ENCODE measurements at regions of chr2 and their contacts with region 1.

Region 1: GRCh38 chr2:62505750-62506420 is at the start of gene TMEM17:
- DNase-seq: peak; percentile 95 to 98
- H3K4me3 ChIP-seq: peak within 1 kb of the TSS; percentile 51
- H3K4me3 Mint-ChIP-seq: peak within 1 kb of the TSS; percentile 83
- H3K27ac Mint-ChIP-seq: peak within 1 kb of the TSS; percentile 87
- H3K4me1 ChIP-seq: no peaks in the 10 kb centered on the region
- H3K4me1 Mint-ChIP-seq: peaks cover 15% of the 10 kb centered on the region
- H3K27me3 ChIP-seq: no peaks in the 10 kb centered on the region
- H3K27me3 Mint-ChIP-seq: no peaks in the 10 kb centered on the region
- CTCF ChIP-seq: no peak
- total RNA-seq, gene TMEM17: 2.6 and 3.3 TPM in 2 replicates

Region 2: GRCh38 chr2:62485761-62486438 is 20.0 kb before region 1 on chr2:
- CTCF ChIA-PET with region 1: no interaction called
- POLR2A ChIA-PET with region 1: no interaction called
- intact Hi-C with region 1: loop called (anchors 2 kb)
- DNase-seq: no peak
- H3K4me3 ChIP-seq: no peak overlapping the region
- H3K4me3 Mint-ChIP-seq: no peak overlapping the region
- H3K27ac Mint-ChIP-seq: peak overlapping the region; percentile 60
- H3K4me1 ChIP-seq: peaks cover 15% of the 10 kb centered on the region
- H3K4me1 Mint-ChIP-seq: peaks cover 16% of the 10 kb centered on the region
- H3K27me3 ChIP-seq: no peaks in the 10 kb centered on the region
- H3K27me3 Mint-ChIP-seq: no peaks in the 10 kb centered on the region
- CTCF ChIP-seq: no peak

Region 3: DNA sequence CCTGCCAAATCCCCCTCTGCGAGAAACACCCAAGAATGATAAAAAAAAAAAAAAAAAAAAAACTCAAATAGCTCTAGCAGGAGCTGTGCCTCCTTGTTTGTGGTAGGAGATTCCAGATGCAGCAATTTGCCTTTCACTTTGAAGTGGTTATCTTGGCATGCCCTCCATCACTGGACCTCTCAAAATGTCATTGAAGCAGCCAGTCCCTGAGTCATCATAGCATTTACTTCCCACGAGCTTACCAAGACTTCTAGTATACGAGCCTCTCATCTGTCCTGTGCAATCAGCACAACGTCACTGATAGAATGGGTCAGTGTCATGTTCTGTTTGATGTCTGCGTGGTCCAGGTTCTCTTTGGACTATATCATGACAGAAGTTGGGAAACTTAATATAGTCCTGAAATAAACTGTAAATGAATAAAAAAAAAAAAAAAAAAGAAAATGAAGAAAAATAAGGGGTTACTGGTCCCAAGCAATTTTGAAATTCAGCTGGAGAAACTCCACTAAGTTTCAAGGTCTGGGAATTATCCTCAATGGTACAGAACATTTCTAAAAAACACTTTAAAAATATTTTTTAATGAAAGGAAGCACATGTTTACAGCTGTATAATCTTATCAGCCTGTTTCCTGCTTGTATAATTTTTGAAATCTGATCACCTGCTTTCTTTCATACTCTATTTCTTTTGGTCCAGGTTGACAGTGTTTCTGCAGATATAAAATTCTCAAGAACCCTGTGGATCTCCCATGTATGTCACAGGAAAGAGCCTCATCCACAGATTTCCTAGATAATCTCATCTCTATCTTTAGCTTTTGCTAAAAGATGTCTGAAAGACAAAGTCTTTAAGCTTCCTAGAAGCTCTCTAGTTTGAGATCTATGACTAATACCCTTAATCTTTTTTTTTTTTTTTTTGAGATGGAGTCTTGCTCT is 125.5 kb after region 1 on chr2:
- CTCF ChIA-PET with region 1: no interaction called
- POLR2A ChIA-PET with region 1: interaction called, 11 read pairs
- intact Hi-C with region 1: no loop called
- DNase-seq: peak in 1 of 2 experiments; percentile 43
- H3K4me3 ChIP-seq: no peak overlapping the region
- H3K4me3 Mint-ChIP-seq: no peak overlapping the region
- H3K27ac Mint-ChIP-seq: no peak overlapping the region
- H3K4me1 ChIP-seq: peaks cover 6% of the 10 kb centered on the region; the same call in 1 of the 2 replicates
- H3K4me1 Mint-ChIP-seq: peaks cover 6% of the 10 kb centered on the region
- H3K27me3 ChIP-seq: no peaks in the 10 kb centered on the region
- H3K27me3 Mint-ChIP-seq: no peaks in the 10 kb centered on the region
- CTCF ChIP-seq: no peak

Region 4: DNA sequence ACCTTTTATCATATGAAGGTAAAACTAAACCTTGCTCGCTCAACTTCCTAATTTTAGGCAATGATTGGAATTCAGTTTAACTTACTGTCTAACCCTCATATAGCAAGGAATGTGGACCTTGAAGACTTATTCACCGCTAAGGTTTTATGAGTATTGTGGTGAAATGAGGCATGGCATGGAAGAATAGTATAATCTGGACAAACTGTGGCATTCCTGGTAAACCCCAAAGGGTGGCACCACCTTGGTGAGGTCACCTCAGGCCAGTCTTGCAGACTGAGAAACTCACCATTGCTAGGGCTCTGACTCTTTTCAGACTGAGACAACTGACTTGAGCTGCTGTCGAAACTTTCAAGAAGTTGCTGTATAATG is 148.5 kb after region 1 on chr2:
- CTCF ChIA-PET with region 1: no interaction called
- POLR2A ChIA-PET with region 1: no interaction called
- intact Hi-C with region 1: loop called (anchors 1 kb)
- DNase-seq: peak in 1 of 2 experiments; percentile 37
- H3K4me3 ChIP-seq: no peak overlapping the region
- H3K4me3 Mint-ChIP-seq: peak overlapping the region; percentile 47
- H3K27ac Mint-ChIP-seq: peak overlapping the region; percentile 81
- H3K4me1 ChIP-seq: peaks cover 24% of the 10 kb centered on the region
- H3K4me1 Mint-ChIP-seq: peaks cover 27% of the 10 kb centered on the region
- H3K27me3 ChIP-seq: no peaks in the 10 kb centered on the region
- H3K27me3 Mint-ChIP-seq: no peaks in the 10 kb centered on the region
- CTCF ChIP-seq: no peak

Region 5: GRCh38 chr2:62687628-62688027 is 181.7 kb after region 1 on chr2:
- CTCF ChIA-PET with region 1: no interaction called
- POLR2A ChIA-PET with region 1: no interaction called
- intact Hi-C with region 1: no loop called
- DNase-seq: no peak
- H3K4me3 ChIP-seq: no peak overlapping the region
- H3K4me3 Mint-ChIP-seq: no peak overlapping the region
- H3K27ac Mint-ChIP-seq: no peak overlapping the region
- H3K4me1 ChIP-seq: peaks cover 15% of the 10 kb centered on the region; the same call in 1 of the 2 replicates
- H3K4me1 Mint-ChIP-seq: peaks cover 27% of the 10 kb centered on the region
- H3K27me3 ChIP-seq: no peaks in the 10 kb centered on the region
- H3K27me3 Mint-ChIP-seq: no peaks in the 10 kb centered on the region
- CTCF ChIP-seq: no peak

Measured in Caco-2 (cell line).